ENCODE measurements at regions of chr22 and their contacts with region 1.

Region 1: DNA sequence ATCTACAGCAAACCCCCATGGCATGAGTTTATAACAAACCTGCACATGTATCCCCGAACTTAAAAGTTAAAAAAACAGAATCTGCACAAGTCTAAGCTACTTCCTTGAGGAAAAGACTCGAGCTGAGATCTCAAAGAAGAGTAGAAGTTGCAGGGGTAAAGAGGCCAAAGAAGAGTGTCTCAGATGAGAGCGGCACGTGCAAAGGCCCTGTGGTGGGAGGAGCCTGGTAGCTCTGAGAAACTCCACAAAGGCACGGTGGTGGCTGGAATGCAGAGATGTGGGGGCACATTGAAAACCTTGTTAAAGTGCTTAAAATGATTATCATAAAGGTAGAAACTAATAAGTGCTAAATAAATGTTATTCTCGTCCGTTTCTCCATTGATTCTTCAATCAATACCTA is 103.2 kb upstream of the GRK3 start:
- DNase-seq: no peak
- H3K4me3 ChIP-seq: no peak overlapping the region
- H3K27me3 ChIP-seq: no peaks in the 10 kb centered on the region
- CTCF ChIP-seq: no peak

Region 2: DNA sequence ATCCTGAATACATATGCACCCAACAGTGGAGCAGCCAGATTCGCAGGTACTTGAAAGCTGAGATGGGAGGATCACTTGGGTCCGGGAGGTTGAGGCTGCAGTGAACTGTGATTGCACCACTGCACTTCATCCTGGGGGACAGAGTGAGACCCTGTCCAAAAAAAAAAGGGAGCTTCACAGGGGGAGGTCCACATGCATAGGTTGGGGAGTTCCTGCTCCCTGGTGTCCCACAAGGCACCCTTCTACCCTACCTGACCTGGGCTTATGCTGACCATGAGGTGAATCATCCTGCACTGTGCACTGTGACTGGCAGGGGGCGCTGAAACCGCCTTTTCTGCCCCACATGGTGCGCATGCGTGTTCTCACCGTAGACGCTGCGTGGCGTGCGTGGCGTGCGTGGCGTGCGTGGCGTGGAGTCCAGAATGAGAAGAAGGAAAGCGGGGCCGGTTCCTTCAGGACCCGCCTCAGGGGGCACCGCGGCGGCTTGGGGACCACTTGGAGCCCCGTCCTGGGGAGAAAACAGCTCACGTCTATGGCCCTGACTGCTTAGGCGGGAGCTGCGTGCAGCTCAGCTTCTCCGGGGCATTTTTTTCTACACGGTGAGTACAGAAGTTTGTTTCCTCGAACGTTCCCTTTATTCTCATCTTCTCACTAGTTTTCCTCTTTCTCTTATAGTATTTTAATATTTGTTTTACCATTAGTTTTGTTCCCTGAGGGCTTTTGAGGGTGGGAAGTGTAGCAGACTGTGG is 13.4 kb before region 1 on chr22:
- CTCF ChIA-PET with region 1: interaction called, 23 read pairs
- POLR2A ChIA-PET with region 1: no interaction called
- DNase-seq: no peak
- H3K4me3 ChIP-seq: peak overlapping the region; percentile 71
- H3K27me3 ChIP-seq: no peaks in the 10 kb centered on the region
- CTCF ChIP-seq: peak; percentile 96

Region 3: DNA sequence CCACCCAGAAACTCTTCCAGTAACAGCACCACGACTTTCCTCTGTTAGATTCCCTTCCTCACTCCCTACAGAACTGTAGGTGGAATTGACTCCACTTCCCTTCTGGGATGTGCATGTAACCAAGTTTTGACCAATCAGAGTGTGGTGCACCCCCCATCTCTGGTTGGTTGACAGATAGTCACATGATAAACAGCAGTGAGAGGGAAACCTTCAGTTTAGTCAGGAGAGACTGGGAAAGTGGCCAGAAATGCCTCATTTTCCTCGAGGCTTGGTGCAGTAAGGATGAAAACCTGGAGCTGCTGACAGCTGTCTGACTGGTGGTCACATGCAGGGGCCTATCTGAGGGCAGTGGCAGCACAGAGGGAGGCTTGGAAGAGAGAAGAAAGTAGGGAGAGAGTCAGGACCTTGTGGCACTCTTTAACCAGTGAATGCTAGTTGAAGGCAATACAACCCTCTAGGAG is 35.9 kb after region 1 on chr22:
- CTCF ChIA-PET with region 1: no interaction called
- POLR2A ChIA-PET with region 1: no interaction called
- DNase-seq: no peak
- H3K4me3 ChIP-seq: no peak overlapping the region
- H3K27me3 ChIP-seq: no peaks in the 10 kb centered on the region
- CTCF ChIP-seq: no peak

Region 4: GRCh38 chr22:25536589-25536988 is 75.3 kb after region 1 on chr22:
- CTCF ChIA-PET with region 1: no interaction called
- POLR2A ChIA-PET with region 1: no interaction called
- DNase-seq: no peak
- H3K4me3 ChIP-seq: no peak overlapping the region
- H3K27me3 ChIP-seq: no peaks in the 10 kb centered on the region
- CTCF ChIP-seq: no peak

Region 5: GRCh38 chr22:25701056-25701780 is 239.9 kb after region 1 on chr22:
- CTCF ChIA-PET with region 1: interaction called, 11 read pairs
- POLR2A ChIA-PET with region 1: no interaction called
- DNase-seq: peak; percentile 30
- H3K4me3 ChIP-seq: no peak overlapping the region
- H3K27me3 ChIP-seq: no peaks in the 10 kb centered on the region
- CTCF ChIP-seq: no peak

Region 6: DNA sequence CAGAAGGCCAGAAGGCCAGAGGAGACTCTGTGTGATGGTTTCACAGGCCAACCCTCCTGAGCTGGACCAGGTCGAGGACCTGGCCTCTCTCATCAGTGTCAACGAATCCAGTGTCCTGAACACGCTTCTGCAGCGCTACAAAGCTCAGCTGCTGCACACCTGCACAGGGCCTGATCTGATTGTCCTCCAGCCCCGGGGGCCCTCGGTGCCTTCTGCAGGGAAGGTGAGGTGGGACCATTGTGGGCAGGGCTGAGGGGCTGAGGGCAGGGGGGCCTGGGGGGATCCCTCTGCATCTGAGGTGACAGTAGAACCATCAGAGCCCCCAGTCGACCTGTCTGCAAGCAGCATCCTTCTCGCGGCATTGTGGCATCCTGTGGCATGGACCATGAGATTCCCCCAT is 311.0 kb after region 1 on chr22:
- CTCF ChIA-PET with region 1: interaction called, 40 read pairs
- POLR2A ChIA-PET with region 1: no interaction called
- DNase-seq: no peak
- H3K4me3 ChIP-seq: no peak overlapping the region
- H3K27me3 ChIP-seq: no peaks in the 10 kb centered on the region
- CTCF ChIP-seq: no peak

Measured in BJ (cell line).